CD14-positive monocyte (primary cell): ENCODE measurements at regions of chr2 and their contacts with region 1.

Region 1: DNA sequence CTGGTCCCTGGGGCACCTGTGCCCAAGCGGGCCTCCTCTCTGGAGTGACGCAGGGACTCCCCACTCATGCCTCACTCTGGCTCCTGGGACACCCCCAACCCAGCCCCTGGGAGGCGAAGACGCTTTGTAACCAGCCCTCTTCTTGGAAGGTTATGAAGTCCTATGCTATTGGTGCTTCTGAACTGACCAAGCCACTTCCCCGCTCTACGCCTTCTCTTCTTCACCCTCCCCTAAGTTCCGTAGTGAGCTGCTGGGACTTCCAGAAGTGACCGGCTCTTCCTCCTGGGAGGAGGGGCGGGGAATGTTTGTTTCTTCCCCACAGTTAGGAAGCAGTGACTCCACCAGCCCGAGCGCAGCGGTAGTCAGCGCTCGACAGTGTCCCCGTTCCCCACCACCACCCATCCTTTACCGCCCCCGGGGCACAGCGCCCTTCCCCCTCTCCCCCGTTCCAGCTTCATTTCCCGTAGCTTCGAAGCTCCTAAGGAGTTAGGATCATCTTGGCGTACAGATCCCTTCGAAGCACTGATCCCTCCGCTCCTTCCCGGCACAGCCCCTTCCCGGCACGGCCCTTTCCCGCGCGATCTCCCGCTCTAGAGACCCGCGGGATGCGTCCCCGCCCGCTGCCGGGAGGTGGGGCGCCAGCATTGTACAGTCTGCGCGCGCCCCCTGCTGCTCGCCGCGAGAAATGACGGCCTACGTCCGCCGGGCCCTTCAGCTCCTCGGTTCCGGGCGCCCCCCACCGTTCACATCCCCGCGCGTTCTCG is 25.3 kb upstream of the NOTO start:
- DNase-seq: peak; percentile 67 to 76 (median 75)
- H3K4me3 ChIP-seq: peak overlapping the region; percentile 50 to 85 (median 63)
- H3K4me3 Mint-ChIP-seq: peak overlapping the region; percentile 95
- H3K27ac ChIP-seq: no peak overlapping the region
- H3K27ac Mint-ChIP-seq: peak overlapping the region in 2 of 7 donors; percentile 28 to 36
- H3K4me1 ChIP-seq: peaks cover 21 to 27% of the 10 kb centered on the region in 2 donors
- H3K4me1 Mint-ChIP-seq: peaks cover 16% of the 10 kb centered on the region
- H3K27me3 ChIP-seq: peaks cover 28 to 69% of the 10 kb centered on the region in 2 donors
- H3K27me3 Mint-ChIP-seq: peaks cover 61 to 88% (median 68%) of the 10 kb centered on the region in 3 donors
- CTCF ChIP-seq: peak; percentile 98

Region 2: DNA sequence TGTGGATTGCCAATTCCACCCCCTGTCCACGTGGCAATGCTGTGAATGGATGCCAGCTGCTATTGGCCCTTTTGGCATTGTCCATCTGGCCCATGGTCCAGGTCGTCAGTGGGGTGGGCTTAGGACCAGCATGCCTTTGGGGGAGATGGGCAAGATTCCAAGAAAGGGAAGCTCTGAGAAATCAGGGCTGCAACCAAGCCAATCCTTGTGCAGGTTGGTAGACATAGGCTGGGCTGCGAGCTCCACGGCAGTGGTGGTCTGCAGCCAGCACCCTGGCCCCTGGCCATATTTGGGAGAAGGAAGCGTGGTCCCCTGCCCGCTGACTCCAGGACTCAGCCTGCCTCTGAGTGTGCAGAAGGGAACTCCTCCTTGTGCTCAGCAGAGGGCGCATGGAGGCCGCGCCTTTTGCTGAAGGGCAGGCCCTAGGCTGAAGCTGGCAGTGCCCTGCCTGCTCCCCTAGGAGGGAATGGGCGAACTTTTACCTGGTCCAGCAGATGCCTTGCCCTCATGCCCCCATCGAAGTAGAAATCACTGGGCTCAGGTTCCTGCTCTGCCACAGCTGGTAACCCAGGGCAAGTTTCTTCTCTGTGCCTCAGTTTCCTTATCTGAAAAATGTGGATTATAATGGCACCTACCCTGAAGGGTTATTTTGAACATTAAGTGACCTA is 284.4 kb before region 1 on chr2:
- intact Hi-C with region 1: loop called in 1 of 2 experiments (anchors 5 kb)
- DNase-seq: peak; percentile 57 to 67 (median 58)
- H3K4me3 ChIP-seq: no peak overlapping the region
- H3K4me3 Mint-ChIP-seq: no peak overlapping the region
- H3K27ac ChIP-seq: no peak overlapping the region
- H3K27ac Mint-ChIP-seq: peak overlapping the region in 1 of 7 donors; percentile 62
- H3K4me1 ChIP-seq: peaks cover 21 to 30% of the 10 kb centered on the region in 2 donors
- H3K4me1 Mint-ChIP-seq: peaks cover 41% of the 10 kb centered on the region
- H3K27me3 ChIP-seq: peaks cover 14 to 38% of the 10 kb centered on the region in 2 donors
- H3K27me3 Mint-ChIP-seq: peaks cover 45 to 54% (median 47%) of the 10 kb centered on the region in 3 donors
- CTCF ChIP-seq: peak; percentile 67

Region 3: DNA sequence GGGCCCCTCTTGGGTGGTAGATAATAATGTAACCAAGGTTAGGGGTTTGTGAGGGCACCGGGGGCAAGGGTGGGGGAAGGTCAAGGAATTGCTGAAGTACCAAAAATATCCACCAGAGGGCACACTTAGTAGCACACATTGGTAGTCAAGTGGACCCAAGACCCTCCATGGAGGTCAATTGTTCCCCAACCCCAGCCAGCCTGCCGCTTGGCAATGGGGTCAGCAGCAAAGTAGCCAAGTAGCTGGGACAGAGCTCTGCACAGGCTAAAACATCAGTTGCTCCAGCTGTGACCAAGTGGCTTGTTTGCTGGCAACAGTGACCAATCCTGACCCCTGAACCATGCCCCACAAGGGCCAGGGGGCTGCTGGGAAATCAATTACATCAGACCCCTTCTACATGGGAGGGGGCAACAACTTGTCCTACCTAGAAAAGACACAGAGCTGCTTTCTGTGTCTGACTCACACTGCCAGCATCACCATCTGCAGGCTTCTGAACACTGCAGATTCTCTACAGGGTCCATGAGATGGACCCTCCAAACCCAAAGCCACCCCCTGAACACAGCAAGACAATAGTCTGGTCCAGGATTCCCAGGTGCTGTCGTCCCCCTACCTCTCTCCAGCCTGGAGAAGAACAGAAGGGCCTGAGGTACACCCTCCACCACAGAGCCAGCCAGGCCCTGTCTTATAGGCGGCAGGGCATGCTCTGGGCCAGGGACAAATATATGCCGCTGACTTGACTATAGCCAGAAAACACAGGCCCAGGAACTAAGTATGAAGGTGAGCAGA is 183.7 kb before region 1 on chr2:
- intact Hi-C with region 1: loop called in 1 of 2 experiments (anchors 1 kb)
- DNase-seq: peak; percentile 26 to 54 (median 47)
- H3K4me3 ChIP-seq: no peak overlapping the region
- H3K4me3 Mint-ChIP-seq: no peak overlapping the region
- H3K27ac ChIP-seq: no peak overlapping the region
- H3K27ac Mint-ChIP-seq: peak overlapping the region in 2 of 7 donors; percentile 32 to 36
- H3K4me1 ChIP-seq: peaks cover 3 to 4% of the 10 kb centered on the region in 2 donors
- H3K4me1 Mint-ChIP-seq: peaks cover 5% of the 10 kb centered on the region
- H3K27me3 ChIP-seq: no peaks in the 10 kb centered on the region
- H3K27me3 Mint-ChIP-seq: no peaks in the 10 kb centered on the region
- CTCF ChIP-seq: peak; percentile 97

Region 4: GRCh38 chr2:73085691-73086360 is 91.2 kb before region 1 on chr2:
- intact Hi-C with region 1: loop called in 1 of 2 experiments (anchors 5 kb)
- DNase-seq: peak; percentile 55 to 75 (median 71)
- H3K4me3 ChIP-seq: no peak overlapping the region
- H3K4me3 Mint-ChIP-seq: no peak overlapping the region
- H3K27ac ChIP-seq: no peak overlapping the region
- H3K27ac Mint-ChIP-seq: no peak overlapping the region
- H3K4me1 ChIP-seq: no peaks in the 10 kb centered on the region
- H3K4me1 Mint-ChIP-seq: peaks cover 2% of the 10 kb centered on the region
- H3K27me3 ChIP-seq: no peaks in the 10 kb centered on the region
- H3K27me3 Mint-ChIP-seq: peaks cover under 1 to 7% (median 1%) of the 10 kb centered on the region in 3 donors
- CTCF ChIP-seq: peak; percentile 94

Region 5: DNA sequence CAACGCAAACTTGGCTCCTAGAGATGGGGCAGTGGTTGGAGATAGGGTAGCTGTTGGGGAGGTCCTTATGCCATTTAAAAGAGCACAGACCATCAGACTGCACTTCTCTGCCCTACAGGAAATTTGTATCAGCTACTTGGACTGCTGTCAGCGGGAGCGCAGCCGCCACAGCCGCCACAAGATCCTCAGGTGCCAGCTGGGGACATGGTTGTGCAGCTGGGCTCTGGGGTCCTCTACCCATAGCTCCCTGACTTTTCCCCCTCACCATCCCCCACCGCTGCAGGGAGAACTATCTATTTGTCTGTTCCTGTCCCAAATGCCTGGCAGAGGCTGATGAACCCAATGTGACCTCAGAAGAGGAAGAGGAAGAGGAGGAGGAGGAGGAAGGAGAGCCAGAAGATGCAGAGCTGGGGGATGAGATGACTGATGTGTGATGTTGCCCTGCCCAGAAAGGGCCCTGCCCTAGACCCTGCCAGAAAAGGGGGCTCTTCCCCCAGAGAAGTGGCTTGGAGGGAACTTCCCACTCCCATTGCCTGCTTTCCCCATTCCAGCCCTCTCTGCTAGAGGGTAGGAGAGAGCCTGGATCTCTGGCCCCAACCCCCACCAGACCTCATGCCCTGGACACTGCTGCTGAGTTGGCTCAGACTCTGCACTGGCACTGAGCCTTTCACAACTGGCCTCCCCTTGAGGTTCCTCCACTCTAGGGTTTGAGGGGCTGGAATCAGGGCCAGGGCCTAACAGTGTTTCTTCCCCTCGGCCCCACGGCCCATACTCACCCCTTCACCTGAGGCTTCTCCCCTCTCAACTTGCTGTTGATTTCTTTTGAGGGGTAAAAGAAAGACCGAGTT is 48.7 kb after region 1 on chr2:
- intact Hi-C with region 1: no loop called
- DNase-seq: peak in 1 of 3 donors; percentile 15
- H3K4me3 ChIP-seq: peak overlapping the region in 1 of 3 experiments; percentile 8
- H3K4me3 Mint-ChIP-seq: peak overlapping the region in 1 of 2 donors; percentile 2
- H3K27ac ChIP-seq: peak overlapping the region; percentile 3 to 58
- H3K27ac Mint-ChIP-seq: peak overlapping the region in 6 of 7 donors; percentile 35 to 74 (median 68)
- H3K4me1 ChIP-seq: peaks cover 12 to 15% of the 10 kb centered on the region in 2 donors
- H3K4me1 Mint-ChIP-seq: peaks cover 12% of the 10 kb centered on the region
- H3K27me3 ChIP-seq: no peaks in the 10 kb centered on the region
- H3K27me3 Mint-ChIP-seq: no peaks in the 10 kb centered on the region
- CTCF ChIP-seq: no peak

Region 6: DNA sequence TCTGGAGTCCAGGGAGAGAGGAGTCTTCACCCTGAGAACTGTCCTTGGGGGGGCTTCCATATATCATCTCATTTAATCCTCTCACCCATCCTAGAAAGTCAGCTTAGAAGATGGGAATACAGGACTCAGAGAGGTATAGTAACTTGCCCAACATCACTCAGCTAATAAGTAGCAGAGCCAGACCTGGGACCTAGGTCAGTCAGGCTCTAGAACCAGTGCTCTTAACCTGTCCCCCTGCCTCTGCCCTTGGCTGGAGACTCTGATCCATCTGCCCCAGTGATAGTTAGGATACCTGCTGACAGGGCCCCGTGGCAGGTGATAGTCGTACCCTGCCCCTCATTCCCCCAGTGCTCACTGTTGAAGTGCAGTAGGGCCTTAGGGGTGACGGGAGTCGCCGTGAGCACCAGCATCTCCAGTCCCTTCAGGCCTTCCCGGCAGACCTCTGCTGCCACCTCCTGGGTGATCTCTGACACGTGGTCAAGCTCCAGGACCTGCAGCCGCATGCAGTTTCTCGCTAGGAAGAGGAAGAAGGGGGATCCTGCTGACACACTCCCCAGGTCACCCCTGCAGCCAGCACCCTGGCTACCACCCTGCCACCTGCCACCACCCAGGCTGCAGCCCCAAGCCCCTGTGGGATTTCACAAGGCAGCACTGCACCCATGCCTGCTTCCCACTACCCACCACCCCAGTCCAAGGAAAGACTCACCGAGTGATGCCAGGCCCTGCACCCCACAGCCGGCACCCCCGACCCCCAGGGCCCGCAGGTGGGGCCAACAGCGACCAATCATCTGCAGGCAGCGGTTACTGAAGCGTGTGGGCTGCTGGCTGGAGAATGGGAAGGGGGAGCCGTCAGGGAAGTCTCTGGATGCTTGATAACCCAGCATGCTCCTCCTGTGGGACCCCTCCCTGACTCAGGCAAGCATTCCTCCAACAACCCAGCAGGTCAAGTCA is 83.2 kb after region 1 on chr2:
- intact Hi-C with region 1: no loop called
- DNase-seq: no peak
- H3K4me3 ChIP-seq: no peak overlapping the region
- H3K4me3 Mint-ChIP-seq: no peak overlapping the region
- H3K27ac ChIP-seq: no peak overlapping the region
- H3K27ac Mint-ChIP-seq: peak overlapping the region in 1 of 7 donors; percentile 11
- H3K4me1 ChIP-seq: no peaks in the 10 kb centered on the region
- H3K4me1 Mint-ChIP-seq: peaks cover 7% of the 10 kb centered on the region
- H3K27me3 ChIP-seq: no peaks in the 10 kb centered on the region
- H3K27me3 Mint-ChIP-seq: peaks cover 1% of the 10 kb centered on the region in 3 donors
- CTCF ChIP-seq: no peak